Mammary epithelial cell (primary cell): ENCODE measurements at regions of chr2 and their contacts with region 1.

Region 1: GRCh38 chr2:25177211-25177611 is 8.8 kb upstream of the POMC start:
- DNase-seq: no peak
- H3K4me3 ChIP-seq: no peak overlapping the region
- H3K27ac ChIP-seq: no peak overlapping the region
- H3K4me1 ChIP-seq: no peaks in the 10 kb centered on the region
- H3K27me3 ChIP-seq: no peaks in the 10 kb centered on the region
- CTCF ChIP-seq: no peak

Region 2: GRCh38 chr2:25088817-25089516 is 88.2 kb before region 1 on chr2:
- CTCF ChIA-PET with region 1: no interaction called
- dilution Hi-C with region 1: loop called (anchors 10 kb)
- in situ Hi-C with region 1: no loop called
- intact Hi-C with region 1: no loop called
- DNase-seq: no peak
- H3K4me3 ChIP-seq: no peak overlapping the region
- H3K27ac ChIP-seq: no peak overlapping the region
- H3K4me1 ChIP-seq: no peaks in the 10 kb centered on the region
- H3K27me3 ChIP-seq: peaks cover 20% of the 10 kb centered on the region
- CTCF ChIP-seq: no peak